ENCODE measurements at regions of chr20 and their contacts with region 1.

Region 1: DNA sequence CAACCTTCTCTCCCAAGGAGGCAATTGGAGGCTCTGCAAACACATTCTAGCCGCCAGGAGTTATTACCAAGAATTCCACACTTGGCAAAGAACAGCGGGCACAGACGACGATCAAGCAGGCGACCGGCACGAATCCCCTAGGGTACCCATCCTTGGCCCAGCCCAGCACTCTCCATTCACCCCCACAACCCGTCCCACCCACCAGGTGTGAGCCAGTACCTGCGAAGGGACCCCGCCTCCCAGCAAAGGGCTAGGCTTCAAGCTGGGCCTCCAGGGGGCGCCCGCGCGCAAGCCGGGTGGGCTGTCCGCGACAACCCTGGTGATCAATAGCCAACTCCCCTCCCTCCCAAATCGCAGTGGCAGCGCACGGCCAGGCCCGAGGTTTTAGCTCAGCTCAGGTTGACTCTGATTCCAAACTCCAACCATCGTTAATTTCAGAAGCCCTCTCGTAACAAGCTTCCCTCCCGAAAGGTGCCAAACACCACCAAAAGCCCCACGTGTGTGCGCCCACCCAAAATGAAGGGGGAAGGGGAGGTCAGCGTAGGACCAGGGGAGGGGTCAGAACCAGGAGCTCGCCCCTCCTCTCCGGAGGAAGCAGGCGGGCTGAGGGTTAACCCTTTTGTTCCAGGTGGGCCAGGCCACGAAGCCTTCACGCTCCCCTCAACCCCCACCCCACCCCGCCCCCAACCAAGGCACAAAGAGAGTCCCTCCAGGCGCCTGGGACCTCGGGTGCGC is 2.1 kb downstream of the SALL4 start:
- DNase-seq: peak; percentile 78
- ATAC-seq: peak; percentile 86
- H3K4me3 Mint-ChIP-seq: peak overlapping the region; percentile 59
- H3K27ac Mint-ChIP-seq: no peak overlapping the region
- H3K4me1 Mint-ChIP-seq: peaks cover 8% of the 10 kb centered on the region
- H3K27me3 Mint-ChIP-seq: peaks cover 56% of the 10 kb centered on the region
- CTCF ChIP-seq: peak; percentile 95

Region 2: GRCh38 chr20:51789434-51789833 is 10.8 kb before region 1 on chr20:
- CTCF ChIA-PET with region 1: interaction called, 12 read pairs
- POLR2A ChIA-PET with region 1: no interaction called
- intact Hi-C with region 1: no loop called
- DNase-seq: no peak
- ATAC-seq: no peak
- H3K4me3 Mint-ChIP-seq: no peak overlapping the region
- H3K27ac Mint-ChIP-seq: no peak overlapping the region
- H3K4me1 Mint-ChIP-seq: no peaks in the 10 kb centered on the region
- H3K27me3 Mint-ChIP-seq: no peaks in the 10 kb centered on the region
- CTCF ChIP-seq: no peak

Region 3: GRCh38 chr20:52083627-52084232 is 283.5 kb after region 1 on chr20:
- CTCF ChIA-PET with region 1: interaction called, 25 read pairs
- POLR2A ChIA-PET with region 1: no interaction called
- intact Hi-C with region 1: loop called (anchors 2 kb)
- DNase-seq: peak; percentile 77
- ATAC-seq: no peak
- H3K4me3 Mint-ChIP-seq: no peak overlapping the region
- H3K27ac Mint-ChIP-seq: no peak overlapping the region
- H3K4me1 Mint-ChIP-seq: peaks cover 12% of the 10 kb centered on the region
- H3K27me3 Mint-ChIP-seq: no peaks in the 10 kb centered on the region
- CTCF ChIP-seq: peak; percentile 77